Posterior vena cava (tissue), 2 donors: ENCODE measurements at regions of chr17 and their contacts with region 1.

Region 1: DNA sequence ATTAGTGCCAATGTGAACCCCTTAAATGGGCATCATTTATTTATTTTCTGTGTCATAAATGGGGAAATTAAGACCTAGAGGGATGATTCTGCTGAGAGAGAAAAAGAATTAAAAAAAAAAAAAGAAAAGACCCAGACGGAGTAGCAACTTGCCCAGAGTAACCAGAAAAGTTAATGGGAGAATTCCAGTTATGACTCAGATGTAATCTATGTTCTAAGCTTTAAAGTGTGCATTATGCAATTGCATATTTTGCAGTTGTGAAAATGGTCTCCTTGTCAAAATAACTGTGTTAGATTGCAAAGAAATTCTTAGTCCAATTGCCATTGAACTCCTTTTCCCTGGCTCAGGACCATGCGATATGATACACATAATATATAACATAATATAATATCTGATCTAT is 38.6 kb upstream of the TBX2 start:
- DNase-seq: no peak

Region 2: GRCh38 chr17:61340431-61341209 is 20.5 kb before region 1 on chr17:
- intact Hi-C with region 1: loop called in 1 of 2 experiments (anchors 2 kb)
- DNase-seq: no peak

Region 3: DNA sequence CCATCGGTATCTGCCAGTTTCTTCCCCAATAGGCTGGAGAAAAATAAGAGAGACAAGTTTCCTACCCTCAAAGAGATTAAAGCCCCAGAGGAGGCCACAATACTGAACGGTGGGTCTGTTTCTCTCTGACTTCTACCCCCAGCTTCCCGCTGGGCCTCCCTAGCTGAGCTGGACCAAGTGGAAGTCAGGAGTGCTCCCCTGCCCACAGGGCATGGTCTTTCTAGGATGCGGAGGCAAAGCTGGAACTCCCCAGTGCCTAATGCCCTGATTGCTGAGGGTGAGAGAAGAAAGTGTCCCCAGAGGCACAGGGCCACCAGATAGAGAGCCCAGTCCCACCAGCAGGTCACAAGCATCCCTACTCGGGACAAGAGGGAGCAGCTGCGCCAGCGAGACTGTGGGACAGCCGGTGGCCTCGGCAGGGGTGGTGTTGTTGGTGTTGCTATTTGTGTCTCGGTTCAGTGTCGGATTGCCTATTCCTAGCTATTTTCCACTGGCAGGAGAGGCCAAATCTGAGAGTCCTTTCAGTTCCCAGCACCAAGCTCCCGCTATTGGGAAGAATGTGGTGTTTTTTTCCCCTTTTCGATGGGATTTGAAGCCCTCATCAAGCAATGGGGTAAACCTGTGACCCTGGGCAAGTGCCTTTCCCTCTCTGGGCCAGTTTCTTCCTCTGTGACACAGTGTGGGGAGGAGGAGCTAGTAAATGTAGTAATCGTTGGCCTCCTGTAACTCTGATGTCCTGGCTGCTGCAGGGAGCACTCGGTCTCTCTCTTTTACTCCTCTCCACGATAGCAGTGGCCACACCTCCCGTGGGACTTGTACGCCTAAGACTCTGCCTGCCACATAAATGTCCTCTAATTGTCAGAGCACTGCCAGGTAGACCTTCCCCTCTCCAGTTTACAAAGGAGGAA is 16.1 kb after region 1 on chr17:
- intact Hi-C with region 1: no loop called
- DNase-seq: no peak

Region 4: GRCh38 chr17:61431594-61432311 is 70.7 kb after region 1 on chr17:
- intact Hi-C with region 1: loop called in 1 of 2 experiments (anchors 2 kb)
- DNase-seq: no peak